GM12878 (cell line): ENCODE measurements at regions of chr4 and their contacts with region 1.

Region 1: GRCh38 chr4:103046416-103047290 is 27.1 kb upstream of the SLC9B1 start:
- DNase-seq: no peak
- ATAC-seq: peak; percentile 98
- H3K4me3 ChIP-seq: no peak overlapping the region
- H3K27ac ChIP-seq: no peak overlapping the region
- H3K4me1 ChIP-seq: peaks cover 6% of the 10 kb centered on the region
- H3K27me3 ChIP-seq: no peaks in the 10 kb centered on the region
- CTCF ChIP-seq: peak; percentile 68 to 78 (median 72)
- EP300 ChIP-seq: no peak
- POLR2A ChIP-seq: no peak
- RAD21 ChIP-seq: peak; percentile 74

Region 2: GRCh38 chr4:102945066-102945465 is 101.6 kb before region 1 on chr4:
- CTCF ChIA-PET with region 1: no interaction called
- POLR2A ChIA-PET with region 1: no interaction called
- RAD21 ChIA-PET with region 1: no interaction called
- SMC1A ChIA-PET with region 1: no interaction called
- in situ Hi-C with region 1: no loop called
- intact Hi-C with region 1: no loop called
- DNase-seq: no peak
- ATAC-seq: no peak
- H3K4me3 ChIP-seq: no peak overlapping the region
- H3K27ac ChIP-seq: no peak overlapping the region
- H3K4me1 ChIP-seq: no peaks in the 10 kb centered on the region
- H3K27me3 ChIP-seq: no peaks in the 10 kb centered on the region
- CTCF ChIP-seq: no peak
- EP300 ChIP-seq: no peak
- POLR2A ChIP-seq: no peak
- RAD21 ChIP-seq: no peak

Region 3: DNA sequence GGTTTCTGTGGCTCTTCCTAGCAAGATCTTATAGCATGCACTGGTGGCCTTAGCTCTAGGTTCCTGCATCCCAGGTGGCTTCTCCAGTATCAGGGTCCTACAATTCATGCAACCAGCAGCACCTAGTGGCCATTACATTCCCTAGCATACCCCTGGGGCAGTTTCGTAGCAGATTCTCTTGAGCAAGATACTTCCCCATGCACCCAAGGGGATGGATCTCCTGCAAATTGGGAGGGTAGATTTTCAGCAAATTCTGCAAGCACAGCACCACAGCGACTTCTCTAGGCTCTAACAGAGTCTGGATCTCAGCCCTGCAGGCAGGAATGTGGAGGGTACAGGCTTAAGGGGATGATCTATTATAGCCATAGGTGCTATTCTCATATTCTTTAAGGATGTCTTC is 14.1 kb before region 1 on chr4:
- CTCF ChIA-PET with region 1: interaction called, 11 read pairs
- POLR2A ChIA-PET with region 1: no interaction called
- RAD21 ChIA-PET with region 1: interaction called, 3 read pairs
- SMC1A ChIA-PET with region 1: interaction called, 3 read pairs
- in situ Hi-C with region 1: no loop called
- intact Hi-C with region 1: no loop called
- DNase-seq: no peak
- ATAC-seq: peak; percentile 92
- H3K4me3 ChIP-seq: no peak overlapping the region
- H3K27ac ChIP-seq: no peak overlapping the region
- H3K4me1 ChIP-seq: no peaks in the 10 kb centered on the region
- H3K27me3 ChIP-seq: no peaks in the 10 kb centered on the region
- CTCF ChIP-seq: peak; percentile 45 to 64 (median 62)
- EP300 ChIP-seq: no peak
- POLR2A ChIP-seq: no peak
- RAD21 ChIP-seq: peak; percentile 54

Region 4: GRCh38 chr4:103415786-103416185 is 369.1 kb after region 1 on chr4:
- CTCF ChIA-PET with region 1: no interaction called
- POLR2A ChIA-PET with region 1: no interaction called
- RAD21 ChIA-PET with region 1: no interaction called
- SMC1A ChIA-PET with region 1: no interaction called
- in situ Hi-C with region 1: no loop called
- intact Hi-C with region 1: no loop called
- DNase-seq: no peak
- ATAC-seq: no peak
- H3K4me3 ChIP-seq: no peak overlapping the region
- H3K27ac ChIP-seq: no peak overlapping the region
- H3K4me1 ChIP-seq: no peaks in the 10 kb centered on the region
- H3K27me3 ChIP-seq: no peaks in the 10 kb centered on the region
- CTCF ChIP-seq: no peak
- EP300 ChIP-seq: no peak
- POLR2A ChIP-seq: no peak
- RAD21 ChIP-seq: no peak